ENCODE measurements at regions of chr5 and their contacts with region 1.

Region 1: DNA sequence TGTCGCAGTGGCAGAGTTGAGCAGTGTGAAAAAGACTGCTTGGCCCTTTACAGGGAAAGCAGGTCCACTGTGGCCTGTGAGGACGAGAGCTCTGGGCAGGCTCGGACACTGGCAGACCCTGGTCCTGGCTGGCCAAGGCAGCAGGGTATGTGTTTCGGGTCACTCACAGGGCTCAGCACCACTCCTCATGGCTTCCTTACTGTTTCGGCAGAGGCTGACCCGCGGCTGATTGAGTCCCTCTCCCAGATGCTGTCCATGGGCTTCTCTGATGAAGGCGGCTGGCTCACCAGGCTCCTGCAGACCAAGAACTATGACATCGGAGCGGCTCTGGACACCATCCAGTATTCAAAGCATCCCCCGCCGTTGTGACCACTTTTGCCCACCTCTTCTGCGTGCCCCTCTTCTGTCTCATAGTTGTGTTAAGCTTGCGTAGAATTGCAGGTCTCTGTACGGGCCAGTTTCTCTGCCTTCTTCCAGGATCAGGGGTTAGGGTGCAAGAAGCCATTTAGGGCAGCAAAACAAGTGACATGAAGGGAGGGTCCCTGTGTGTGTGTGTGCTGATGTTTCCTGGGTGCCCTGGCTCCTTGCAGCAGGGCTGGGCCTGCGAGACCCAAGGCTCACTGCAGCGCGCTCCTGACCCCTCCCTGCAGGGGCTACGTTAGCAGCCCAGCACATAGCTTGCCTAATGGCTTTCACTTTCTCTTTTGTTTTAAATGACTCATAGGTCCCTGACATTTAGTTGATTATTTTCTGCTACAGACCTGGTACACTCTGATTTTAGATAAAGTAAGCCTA is 15.7 kb downstream of the SQSTM1 start:
- DNase-seq: peak; percentile 38 to 78 (median 49)
- ATAC-seq: peak; percentile 86 to 92
- H3K4me3 Mint-ChIP-seq: peak overlapping the region in 9 of 10 donors; percentile 22 to 61 (median 46)
- H3K27ac Mint-ChIP-seq: peak overlapping the region; percentile 79 to 96 (median 90)
- H3K4me1 Mint-ChIP-seq: peaks cover 15 to 23% (median 20%) of the 10 kb centered on the region in 4 donors
- H3K27me3 Mint-ChIP-seq: no peaks in the 10 kb centered on the region

Region 2: DNA sequence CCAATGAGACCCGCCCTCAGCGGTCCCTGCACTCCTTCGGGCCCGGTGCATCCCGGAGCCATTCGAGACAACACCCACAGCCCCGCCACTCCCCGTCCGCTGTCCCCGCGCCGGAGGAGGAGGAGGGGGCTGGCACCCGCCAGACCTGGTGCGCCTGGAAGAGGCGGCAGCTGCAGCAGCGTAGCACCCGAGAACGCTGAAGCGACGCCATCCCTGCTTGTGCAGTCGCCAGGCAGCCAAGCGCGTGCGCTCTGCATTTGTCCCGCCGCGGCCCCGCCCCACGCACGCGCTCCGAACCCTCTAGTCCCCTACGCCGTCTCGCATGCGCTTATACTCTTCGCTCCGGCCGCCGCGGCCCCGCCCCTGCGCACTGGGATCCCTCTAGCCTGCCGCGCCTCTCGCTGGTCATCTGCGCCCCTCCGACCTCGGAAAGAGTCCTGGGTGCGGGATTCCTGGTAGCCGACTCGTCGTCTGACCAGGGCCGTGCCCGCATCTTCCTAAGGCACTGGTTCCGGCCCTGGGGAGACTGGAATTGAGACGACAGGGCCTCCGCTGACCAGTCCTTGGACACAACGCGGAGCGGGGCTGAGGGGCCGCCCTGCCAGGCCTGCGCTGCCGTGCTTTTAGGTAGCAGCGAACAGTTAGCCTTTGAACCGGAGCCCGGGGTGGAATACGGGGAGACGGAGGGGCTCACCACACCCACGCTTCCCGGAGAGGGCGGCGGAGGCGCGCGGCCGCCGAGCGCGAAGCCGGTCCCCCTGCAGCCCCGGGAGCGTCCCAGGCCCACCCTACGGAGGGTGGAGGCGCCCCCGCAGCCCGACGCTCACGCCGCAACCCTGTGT is 22.4 kb after region 1 on chr5 and contains the start of gene MRNIP:
- POLR2A ChIA-PET with region 1: interaction called, 13 read pairs
- DNase-seq: peak; percentile 80 to 90 (median 84)
- ATAC-seq: peak; percentile 93 to 95
- H3K4me3 Mint-ChIP-seq: peak within 1 kb of the TSS; percentile 88 to 99 (median 98)
- H3K27ac Mint-ChIP-seq: peak within 1 kb of the TSS; percentile 77 to 97 (median 95)
- H3K4me1 Mint-ChIP-seq: peaks cover 9 to 34% (median 23%) of the 10 kb centered on the region in 4 donors
- H3K27me3 Mint-ChIP-seq: no peaks in the 10 kb centered on the region
- polyA plus RNA-seq, gene MRNIP: 13.6 to 18.5 (median 15.5) TPM

Region 3: DNA sequence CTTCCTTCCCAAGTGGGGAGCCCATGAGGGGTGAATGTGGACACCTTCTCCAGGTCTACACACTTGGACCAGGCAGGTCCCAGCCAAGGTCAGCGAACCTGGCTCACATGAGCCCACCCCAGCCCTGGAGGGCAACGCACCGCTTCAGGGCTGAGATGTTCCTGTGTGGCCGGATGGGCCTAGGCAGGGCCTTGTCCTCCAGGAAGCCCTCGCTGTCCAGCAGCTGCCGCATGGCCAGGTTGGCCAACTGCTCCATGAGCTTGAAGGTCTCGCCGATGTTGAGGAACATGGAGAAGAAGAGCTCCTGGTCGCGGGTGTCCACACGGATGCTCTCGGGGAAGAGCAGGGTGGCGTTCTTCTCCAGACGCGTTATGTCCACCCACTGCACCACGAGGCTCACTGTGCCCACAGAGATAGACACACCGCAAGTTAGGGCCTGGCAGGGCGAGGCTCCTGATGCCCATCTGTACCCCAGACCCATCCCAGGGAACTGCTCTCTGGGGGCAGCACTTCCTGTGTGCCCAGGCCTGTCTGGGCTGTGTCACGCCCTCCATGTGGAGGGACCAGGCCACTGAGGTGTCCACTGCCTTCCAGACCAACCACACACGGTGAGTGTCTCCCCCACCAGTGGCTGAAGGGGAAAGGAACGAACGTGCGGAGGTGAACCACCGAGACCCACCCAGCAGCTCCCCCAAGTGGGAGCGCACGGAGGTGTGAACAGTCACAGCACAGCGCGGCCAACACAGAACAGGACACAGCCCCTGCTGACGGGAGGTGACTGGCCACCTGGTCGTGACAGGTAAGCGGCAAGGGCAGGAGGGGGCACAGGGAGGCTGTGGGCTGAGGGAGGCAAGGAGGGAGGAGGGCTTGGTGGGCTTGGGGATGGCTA is 56.9 kb after region 1 on chr5:
- POLR2A ChIA-PET with region 1: no interaction called
- DNase-seq: no peak
- ATAC-seq: no peak
- H3K4me3 Mint-ChIP-seq: no peak overlapping the region
- H3K27ac Mint-ChIP-seq: peak overlapping the region in 2 of 10 donors; percentile 24
- H3K4me1 Mint-ChIP-seq: peaks cover 0 to 1% (median 0%) of the 10 kb centered on the region in 4 donors
- H3K27me3 Mint-ChIP-seq: no peaks in the 10 kb centered on the region

Region 4: DNA sequence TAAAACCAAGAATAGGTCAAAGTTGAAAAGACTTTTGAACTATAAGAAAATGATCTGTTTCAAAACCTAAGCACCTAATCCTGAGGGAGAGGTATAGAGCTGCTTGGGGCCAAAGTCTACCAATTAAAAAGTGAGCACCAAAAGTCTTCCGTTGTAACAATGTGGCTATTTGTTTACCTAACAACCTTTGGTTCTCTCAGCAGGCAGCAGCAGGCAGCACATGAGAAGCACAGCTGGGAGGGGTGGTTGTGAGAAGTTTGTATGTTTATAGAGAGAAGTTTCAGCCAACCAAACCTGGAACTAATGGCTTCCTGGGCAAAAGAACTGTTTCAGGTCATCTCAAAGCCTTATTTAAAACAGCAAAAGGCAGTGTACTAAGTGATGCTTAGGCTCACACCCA is 131.1 kb after region 1 on chr5:
- POLR2A ChIA-PET with region 1: no interaction called
- DNase-seq: no peak
- ATAC-seq: no peak
- H3K4me3 Mint-ChIP-seq: no peak overlapping the region
- H3K27ac Mint-ChIP-seq: no peak overlapping the region
- H3K4me1 Mint-ChIP-seq: peaks cover 2 to 25% (median 11%) of the 10 kb centered on the region in 4 donors
- H3K27me3 Mint-ChIP-seq: no peaks in the 10 kb centered on the region

Measured in naive thymus-derived CD8-positive, alpha-beta T cell (primary cell).